A549 (cell line): ENCODE measurements at regions of chr1 and their contacts with region 1.

Region 1: GRCh38 chr1:204162231-204163074 is 3.7 kb downstream of the REN start:
- DNase-seq: peak; percentile 77 to 85
- ATAC-seq: peak; percentile 89 to 98
- H3K4me3 ChIP-seq: no peak overlapping the region
- H3K27ac ChIP-seq: no peak overlapping the region
- H3K4me1 ChIP-seq: no peaks in the 10 kb centered on the region
- CTCF ChIP-seq: peak; percentile 98
- EP300 ChIP-seq: no peak
- POLR2A ChIP-seq: no peak
- RAD21 ChIP-seq: peak; percentile 97

Region 2: DNA sequence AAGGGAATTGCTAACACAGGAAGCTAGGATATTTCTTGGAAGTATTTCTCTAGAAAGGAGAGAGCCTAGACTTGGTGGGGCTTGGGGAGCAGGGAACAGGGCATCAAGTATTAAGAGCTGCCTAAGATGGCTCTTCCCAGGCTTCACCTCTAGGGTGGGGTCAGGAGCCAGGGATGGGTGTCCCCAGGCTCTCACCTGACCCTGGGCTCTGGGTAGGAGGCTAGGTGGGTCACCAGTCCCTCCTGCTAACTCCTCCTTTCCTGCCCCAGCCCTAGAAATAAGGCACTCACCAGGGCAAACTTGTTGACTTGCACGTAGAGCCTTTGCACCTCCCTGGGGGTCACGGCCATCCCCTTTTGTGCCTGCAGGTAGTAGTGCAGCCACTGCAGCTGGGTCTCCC is 25.6 kb before region 1 on chr1:
- CTCF ChIA-PET with region 1: interaction called, 25 read pairs
- POLR2A ChIA-PET with region 1: no interaction called
- DNase-seq: no peak
- ATAC-seq: no peak; a peak in 1 of 6 replicates
- H3K4me3 ChIP-seq: no peak overlapping the region
- H3K27ac ChIP-seq: no peak overlapping the region
- H3K4me1 ChIP-seq: no peaks in the 10 kb centered on the region
- CTCF ChIP-seq: no peak
- EP300 ChIP-seq: no peak
- POLR2A ChIP-seq: no peak
- RAD21 ChIP-seq: no peak

Region 3: DNA sequence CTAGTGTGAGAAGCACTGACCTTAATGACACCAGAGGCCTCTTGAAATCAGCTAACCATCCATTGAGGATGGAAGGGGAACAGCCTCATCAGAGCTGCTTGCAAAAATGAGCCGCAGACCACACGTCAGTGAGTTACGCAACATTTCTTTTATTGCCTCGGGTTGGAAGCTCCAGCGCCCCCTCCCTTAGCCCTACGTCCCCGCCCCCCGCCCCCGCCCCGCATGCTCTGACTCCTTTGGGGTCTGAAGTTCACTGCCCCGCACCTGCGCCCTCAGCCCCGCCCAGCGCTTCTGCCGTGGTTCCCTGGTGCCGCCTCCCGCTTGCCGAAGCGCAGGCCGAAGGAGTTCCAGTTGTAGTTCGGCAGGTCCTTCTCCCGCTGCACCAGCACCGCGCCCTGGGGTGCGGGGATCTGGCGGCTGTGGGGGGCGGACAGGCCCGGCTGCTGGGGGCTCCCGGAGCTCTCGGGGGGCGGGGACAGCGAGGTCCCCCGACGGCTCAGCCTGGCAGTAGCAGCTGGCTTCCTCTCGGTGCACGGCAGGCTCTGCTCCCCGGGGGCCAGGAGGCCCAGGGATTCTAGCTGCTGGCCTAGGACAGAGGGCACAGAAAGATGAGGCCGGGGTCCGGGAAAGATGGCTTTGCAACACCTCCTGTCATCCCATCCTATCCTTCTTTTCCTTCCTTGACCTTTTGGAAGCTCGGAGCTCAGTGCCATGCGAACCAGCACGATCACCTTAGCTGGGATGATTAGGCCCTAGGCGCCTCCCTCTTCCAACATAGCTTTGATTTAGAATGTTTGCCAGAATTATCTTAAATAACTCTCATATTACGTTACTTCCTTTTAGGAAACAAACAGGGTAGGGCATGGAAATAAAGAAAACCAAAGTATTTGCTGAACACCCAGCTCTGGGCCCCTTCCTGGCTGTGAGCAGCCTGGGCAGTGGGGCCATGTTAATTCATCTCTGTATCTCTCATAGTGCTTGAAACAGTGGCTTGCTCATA is 28.1 kb after region 1 on chr1:
- CTCF ChIA-PET with region 1: interaction called, 53 read pairs
- POLR2A ChIA-PET with region 1: no interaction called
- DNase-seq: no peak
- ATAC-seq: no peak
- H3K4me3 ChIP-seq: no peak overlapping the region
- H3K27ac ChIP-seq: no peak overlapping the region
- H3K4me1 ChIP-seq: peaks cover under 1% of the 10 kb centered on the region; the same call in 1 of the 3 replicates
- CTCF ChIP-seq: no peak
- EP300 ChIP-seq: no peak
- POLR2A ChIP-seq: no peak
- RAD21 ChIP-seq: no peak

Region 4: DNA sequence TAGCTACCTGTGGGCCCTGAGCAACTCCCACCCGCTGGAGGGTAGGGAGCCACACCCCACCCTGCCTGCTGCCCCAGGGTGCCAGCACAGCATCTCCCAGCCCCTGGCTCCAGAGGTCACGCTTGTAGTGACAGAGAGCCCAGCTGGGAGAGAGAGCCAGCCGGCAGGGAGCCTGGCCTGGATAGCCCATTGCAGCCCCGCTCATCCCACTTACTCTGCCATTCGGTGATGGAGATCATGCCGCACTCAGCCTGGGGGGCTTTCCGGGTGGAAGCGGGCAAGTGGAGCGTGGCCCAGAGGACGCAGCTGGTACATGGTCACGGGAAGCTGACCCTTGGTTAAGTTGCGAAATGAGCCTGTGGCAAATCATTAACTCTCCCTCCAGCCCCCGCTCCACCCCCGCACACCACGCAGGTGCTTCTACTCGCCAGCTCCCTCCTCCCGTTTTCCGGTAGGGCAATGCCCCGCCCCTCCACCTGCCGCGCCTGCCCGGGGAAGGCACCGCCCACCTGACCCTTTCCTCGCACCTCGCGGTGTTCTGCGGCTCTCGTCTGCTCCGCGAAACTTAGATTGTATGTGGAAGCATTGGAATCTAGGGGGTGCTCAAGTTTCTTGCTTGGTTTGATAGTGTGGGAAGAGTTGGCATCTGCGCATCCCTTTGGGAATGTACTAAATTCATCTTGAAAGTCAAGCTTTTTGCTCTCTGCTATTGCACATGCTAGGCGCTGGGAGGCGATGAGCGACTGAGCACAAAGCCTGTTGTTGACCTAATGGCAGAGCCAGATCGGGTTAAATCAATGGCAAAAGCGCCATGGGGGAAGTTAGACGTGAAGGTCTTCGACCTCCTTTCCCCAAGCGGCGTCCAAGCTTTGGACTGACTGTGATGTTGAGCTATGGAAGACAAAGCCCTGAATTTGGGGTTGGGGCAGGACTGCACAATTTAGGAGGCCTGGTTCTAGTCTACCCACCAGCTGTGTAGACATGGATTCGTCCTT is 51.5 kb after region 1 on chr1 and contains the start of gene GOLT1A:
- CTCF ChIA-PET with region 1: interaction called, 44 read pairs
- POLR2A ChIA-PET with region 1: no interaction called
- DNase-seq: peak; percentile 78 to 91
- ATAC-seq: peak; percentile 88 to 92
- H3K4me3 ChIP-seq: peak within 1 kb of the TSS; percentile 54
- H3K27ac ChIP-seq: peak within 1 kb of the TSS; percentile 73 to 88
- H3K4me1 ChIP-seq: peaks cover 6% of the 10 kb centered on the region; the same call in 2 of the 3 replicates
- CTCF ChIP-seq: peak; percentile 84
- EP300 ChIP-seq: no peak
- POLR2A ChIP-seq: no peak
- RAD21 ChIP-seq: peak; percentile 85 to 86
- polyA plus RNA-seq, gene GOLT1A: 6.4 and 6.8 TPM in 2 replicates

Region 5: GRCh38 chr1:204257954-204258752 is 95.7 kb after region 1 on chr1:
- CTCF ChIA-PET with region 1: interaction called, 38 read pairs
- POLR2A ChIA-PET with region 1: no interaction called
- DNase-seq: peak; percentile 74 to 85
- ATAC-seq: peak; percentile 86 to 93
- H3K4me3 ChIP-seq: no peak overlapping the region
- H3K27ac ChIP-seq: peak overlapping the region; percentile 7 to 31; a peak in 1 of 6 replicates
- H3K4me1 ChIP-seq: peaks cover 35% of the 10 kb centered on the region
- CTCF ChIP-seq: peak; percentile 83
- EP300 ChIP-seq: no peak
- POLR2A ChIP-seq: no peak
- RAD21 ChIP-seq: peak; percentile 90 to 92

Region 6: DNA sequence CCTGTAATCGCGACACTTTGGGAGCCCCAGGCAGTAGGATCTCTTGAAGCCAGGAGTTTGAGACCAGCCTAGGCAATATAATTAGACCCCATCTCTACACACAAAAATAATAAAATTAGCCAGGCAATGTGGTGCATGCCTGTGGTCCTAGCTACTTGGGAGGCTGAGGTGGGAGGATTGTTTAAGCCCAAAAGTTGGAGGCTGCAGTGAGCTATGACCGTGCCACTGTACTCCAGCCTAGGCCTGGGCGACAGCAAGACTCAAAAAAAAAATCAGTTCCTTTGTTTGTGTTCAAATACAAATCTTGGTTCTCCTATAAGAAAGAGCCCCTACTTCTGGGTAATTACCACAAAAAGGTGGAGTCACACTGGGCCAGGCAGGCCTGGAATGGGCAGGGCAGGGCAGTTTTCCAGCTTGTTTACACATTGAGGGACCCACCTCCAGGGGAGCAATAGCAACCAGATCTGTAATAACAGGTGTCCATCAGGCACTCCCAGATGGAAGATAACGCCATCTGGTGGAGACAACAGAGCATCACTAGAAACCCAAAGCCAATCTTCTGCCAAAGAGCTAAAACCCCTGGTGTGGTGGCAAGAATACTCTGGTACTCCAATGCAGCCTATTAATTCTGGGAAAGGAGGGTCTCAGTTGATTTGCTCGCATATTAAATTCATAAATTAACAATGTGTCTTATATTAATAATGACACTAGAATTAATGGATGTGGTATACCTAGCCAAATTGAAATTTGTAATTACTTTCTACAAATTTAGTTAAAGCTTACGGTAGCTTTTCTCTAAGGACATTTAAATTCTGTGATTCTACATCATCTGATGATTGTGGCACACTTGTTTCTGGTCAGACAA is 236.0 kb after region 1 on chr1:
- CTCF ChIA-PET with region 1: interaction called, 83 read pairs
- POLR2A ChIA-PET with region 1: no interaction called
- DNase-seq: peak; percentile 93 to 96
- ATAC-seq: peak; percentile 92 to 99
- H3K4me3 ChIP-seq: no peak overlapping the region
- H3K27ac ChIP-seq: no peak overlapping the region
- H3K4me1 ChIP-seq: peaks cover 7% of the 10 kb centered on the region; the same call in 2 of the 3 replicates
- CTCF ChIP-seq: peak; percentile 88
- EP300 ChIP-seq: no peak
- POLR2A ChIP-seq: no peak
- RAD21 ChIP-seq: peak; percentile 71 to 72

Region 7: DNA sequence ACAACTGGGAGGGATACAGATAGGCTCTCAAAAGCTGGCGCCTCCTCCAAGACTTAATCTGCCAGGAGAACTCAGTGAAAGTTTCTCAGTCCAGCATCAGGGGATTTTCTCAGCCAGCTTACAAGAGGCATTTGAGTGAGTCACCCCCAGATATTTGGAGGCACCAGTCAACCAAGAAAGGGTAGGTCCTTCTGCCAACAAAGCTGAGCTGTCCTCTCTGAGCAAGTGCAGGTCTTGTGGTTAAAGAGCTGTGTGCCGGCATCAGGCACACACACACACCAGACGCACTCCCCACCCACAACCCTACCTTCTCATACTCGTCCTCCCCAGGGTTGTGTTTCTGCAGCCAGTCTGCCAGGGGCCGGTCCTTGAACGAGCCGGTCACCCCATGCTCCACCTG is 276.2 kb after region 1 on chr1:
- CTCF ChIA-PET with region 1: no interaction called
- POLR2A ChIA-PET with region 1: no interaction called
- DNase-seq: peak; percentile 52 to 66
- ATAC-seq: peak; percentile 82 to 83
- H3K4me3 ChIP-seq: no peak overlapping the region
- H3K27ac ChIP-seq: peak overlapping the region in 1 of 2 experiments; percentile 63; a peak in 3 of 6 replicates
- H3K4me1 ChIP-seq: peaks cover 34% of the 10 kb centered on the region
- CTCF ChIP-seq: no peak
- EP300 ChIP-seq: no peak
- POLR2A ChIP-seq: no peak
- RAD21 ChIP-seq: no peak